PC-3 (cell line): ENCODE measurements at regions of chr2 and their contacts with region 1.

Region 1: DNA sequence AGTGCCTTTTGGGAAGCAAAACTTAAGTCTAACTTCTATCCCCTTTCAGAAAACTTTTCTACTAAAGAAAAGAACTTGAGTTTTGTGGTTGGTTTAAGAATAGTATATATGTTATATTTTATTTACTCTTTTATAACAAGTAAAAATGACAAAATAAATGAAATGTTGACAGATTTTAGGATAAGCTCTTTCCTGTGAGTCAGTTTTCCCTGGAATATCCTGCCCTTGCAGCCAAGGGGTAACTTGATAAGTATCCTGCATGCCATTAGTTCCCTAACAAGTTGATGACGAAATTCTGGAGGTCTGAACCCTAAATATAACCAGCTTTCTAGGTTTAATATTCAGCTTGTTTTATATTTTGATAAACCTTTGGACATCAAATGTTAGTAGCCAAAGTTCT is 7.3 kb upstream of the HTR2B start:
- DNase-seq: peak; percentile 76
- ATAC-seq: peak; percentile 28
- H3K4me3 ChIP-seq: peak overlapping the region; percentile 39; the same call in 1 of the 2 replicates
- H3K27ac ChIP-seq: peak overlapping the region; percentile 85
- H3K4me1 ChIP-seq: peaks cover 75% of the 10 kb centered on the region
- H3K27me3 ChIP-seq: no peaks in the 10 kb centered on the region
- CTCF ChIP-seq: no peak

Region 2: GRCh38 chr2:230981704-230982103 is 150.4 kb before region 1 on chr2:
- CTCF ChIA-PET with region 1: no interaction called
- POLR2A ChIA-PET with region 1: no interaction called
- intact Hi-C with region 1: no loop called
- DNase-seq: no peak
- ATAC-seq: no peak
- H3K4me3 ChIP-seq: no peak overlapping the region
- H3K27ac ChIP-seq: no peak overlapping the region
- H3K4me1 ChIP-seq: peaks cover 2% of the 10 kb centered on the region
- H3K27me3 ChIP-seq: no peaks in the 10 kb centered on the region; the same call in 1 of the 2 replicates
- CTCF ChIP-seq: no peak

Region 3: DNA sequence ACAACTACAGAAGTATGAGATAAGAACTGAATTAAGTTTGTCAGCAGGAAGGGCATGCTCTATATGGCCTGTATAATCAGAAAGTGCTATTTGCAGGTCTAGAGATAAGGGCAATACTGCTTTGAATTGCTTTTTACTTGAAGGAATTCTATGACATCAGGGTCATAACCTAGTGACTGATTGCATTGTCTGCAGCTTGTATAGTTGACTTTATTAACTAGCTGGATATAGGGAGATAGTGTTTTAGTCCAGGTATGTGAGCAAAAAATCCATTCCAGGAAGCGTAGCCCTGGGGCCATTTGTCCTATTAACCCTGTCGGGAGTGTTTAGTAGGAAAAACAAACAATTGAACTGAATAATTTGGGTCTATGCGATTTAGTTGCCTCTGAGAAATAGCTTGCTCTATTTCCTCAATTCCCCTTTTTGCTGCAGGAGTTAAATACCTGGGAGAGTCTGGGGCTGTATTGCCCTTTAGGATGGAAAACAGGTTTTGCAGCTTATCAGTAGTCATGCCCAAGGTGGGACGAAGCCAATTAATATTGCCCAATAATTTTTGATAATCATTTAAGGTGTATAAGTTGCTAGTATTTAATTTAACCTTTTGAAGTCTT is 37.3 kb before region 1 on chr2:
- CTCF ChIA-PET with region 1: no interaction called
- POLR2A ChIA-PET with region 1: no interaction called
- intact Hi-C with region 1: no loop called
- DNase-seq: no peak
- ATAC-seq: no peak
- H3K4me3 ChIP-seq: no peak overlapping the region
- H3K27ac ChIP-seq: no peak overlapping the region
- H3K4me1 ChIP-seq: peaks cover 3% of the 10 kb centered on the region
- H3K27me3 ChIP-seq: no peaks in the 10 kb centered on the region
- CTCF ChIP-seq: no peak

Region 4: DNA sequence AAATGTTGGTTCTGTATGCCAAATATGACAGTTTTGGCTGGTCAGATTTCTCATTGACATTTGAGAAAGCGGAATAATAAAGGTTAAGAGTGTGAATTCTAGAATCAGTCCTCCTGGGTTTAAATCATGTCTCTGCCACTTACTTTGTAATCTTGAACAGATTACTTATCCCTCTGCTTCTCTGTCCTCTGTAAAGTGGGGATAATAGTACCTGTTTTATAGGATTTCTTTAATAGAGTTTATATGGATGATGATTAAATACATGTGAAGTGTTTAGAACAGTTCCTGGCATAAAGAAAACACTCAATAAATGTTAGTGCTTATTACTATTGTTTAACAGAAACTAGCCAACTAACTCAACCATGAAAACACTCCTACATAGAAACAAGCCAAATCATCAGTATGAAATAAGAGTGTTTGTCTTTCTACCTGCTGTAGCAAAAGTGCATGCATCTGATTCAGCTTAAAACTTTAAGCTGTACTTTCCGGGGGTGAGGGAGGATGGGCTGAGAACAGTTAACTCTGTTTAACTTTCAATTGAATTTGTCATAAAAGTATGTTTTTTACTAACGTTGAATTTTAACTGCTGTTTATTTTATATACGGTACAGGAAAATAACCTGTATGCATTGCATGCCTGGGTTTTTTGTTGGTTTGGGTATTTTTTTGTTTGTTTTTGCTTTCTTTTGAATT is 14.1 kb before region 1 on chr2:
- CTCF ChIA-PET with region 1: no interaction called
- POLR2A ChIA-PET with region 1: interaction called, 8 read pairs
- intact Hi-C with region 1: loop called (anchors 1 kb)
- DNase-seq: peak; percentile 23
- ATAC-seq: peak; percentile 92
- H3K4me3 ChIP-seq: no peak overlapping the region
- H3K27ac ChIP-seq: peak overlapping the region; percentile 74
- H3K4me1 ChIP-seq: peaks cover 12% of the 10 kb centered on the region
- H3K27me3 ChIP-seq: no peaks in the 10 kb centered on the region
- CTCF ChIP-seq: no peak

Region 5: DNA sequence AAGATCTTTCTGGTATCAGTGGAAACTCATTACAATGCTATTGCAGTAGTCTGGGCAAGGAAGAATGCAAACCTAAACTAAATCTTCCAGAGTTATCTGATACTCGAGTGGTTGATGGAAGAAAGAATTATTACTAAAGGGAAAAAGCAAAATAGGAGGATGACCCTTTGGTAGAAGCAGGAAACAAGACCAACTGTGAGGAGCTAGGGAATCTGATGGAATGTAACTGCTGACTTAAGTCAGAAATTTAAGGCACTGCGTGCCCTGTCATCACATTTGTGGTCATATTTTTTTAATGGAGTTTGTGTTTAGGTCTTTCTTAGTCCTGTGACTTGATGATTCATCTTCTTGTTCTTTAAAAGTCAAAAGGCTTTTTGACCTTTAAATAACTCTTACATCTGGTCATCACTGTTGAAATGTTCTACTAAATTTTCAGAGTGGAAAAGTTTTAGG is 29.8 kb after region 1 on chr2:
- CTCF ChIA-PET with region 1: no interaction called
- POLR2A ChIA-PET with region 1: no interaction called
- intact Hi-C with region 1: loop called (anchors 2 kb)
- DNase-seq: peak; percentile 64
- ATAC-seq: peak; percentile 88
- H3K4me3 ChIP-seq: no peak overlapping the region
- H3K27ac ChIP-seq: peak overlapping the region; percentile 72
- H3K4me1 ChIP-seq: peaks cover 16% of the 10 kb centered on the region
- H3K27me3 ChIP-seq: no peaks in the 10 kb centered on the region
- CTCF ChIP-seq: no peak